PC-9 (cell line): ENCODE measurements at regions of chr2 and their contacts with region 1.

Region 1: DNA sequence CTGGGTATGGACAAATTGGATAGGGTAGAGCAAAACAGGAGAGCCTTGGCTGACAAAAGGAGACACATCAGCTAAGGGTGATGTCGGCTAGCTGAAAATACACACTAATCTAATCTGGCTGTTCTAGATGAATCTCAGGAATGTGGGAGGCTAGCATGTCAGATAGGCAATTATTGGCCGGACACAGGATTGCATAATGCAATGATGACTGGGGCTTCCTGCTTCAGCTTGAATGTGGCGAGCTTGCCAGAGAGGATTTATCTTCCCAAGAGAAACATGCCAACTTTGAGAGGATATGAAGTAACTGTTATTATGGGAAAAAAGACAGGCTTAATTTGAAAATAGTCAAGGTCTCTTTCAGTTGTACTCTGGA is 102.4 kb downstream of the TRIB2 start:
- DNase-seq: peak; percentile 31 to 89
- H3K4me3 ChIP-seq: no peak overlapping the region
- H3K27ac ChIP-seq: peak overlapping the region; percentile 30; the same call in 1 of the 2 replicates
- H3K4me1 ChIP-seq: peaks cover 26% of the 10 kb centered on the region
- H3K27me3 ChIP-seq: no peaks in the 10 kb centered on the region
- CTCF ChIP-seq: no peak

Region 2: DNA sequence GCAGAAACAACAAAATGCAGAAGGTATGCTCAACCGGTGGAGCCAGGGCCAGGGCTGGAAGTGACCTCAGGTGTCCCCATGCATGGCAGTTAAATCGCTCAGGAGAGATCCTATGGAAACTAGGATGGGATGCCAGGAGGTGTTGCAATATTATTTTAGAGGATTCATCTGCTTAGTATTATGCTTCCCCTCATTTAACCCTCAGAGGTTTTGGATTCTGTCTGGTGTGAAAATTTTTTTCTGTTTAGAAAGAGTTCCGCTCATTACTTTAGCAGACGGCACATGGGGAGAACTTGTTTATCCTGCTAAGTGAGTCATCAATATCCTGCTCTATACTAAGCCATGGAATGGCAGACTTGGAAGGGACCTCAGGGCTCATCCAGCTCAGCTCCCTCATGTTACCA is 59.8 kb before region 1 on chr2:
- CTCF ChIA-PET with region 1: no interaction called
- POLR2A ChIA-PET with region 1: no interaction called
- intact Hi-C with region 1: loop called (anchors 5 kb)
- DNase-seq: peak; percentile 28 to 90
- H3K4me3 ChIP-seq: no peak overlapping the region
- H3K27ac ChIP-seq: peak overlapping the region; percentile 62
- H3K4me1 ChIP-seq: peaks cover 19% of the 10 kb centered on the region
- H3K27me3 ChIP-seq: no peaks in the 10 kb centered on the region
- CTCF ChIP-seq: no peak